Dorsolateral prefrontal cortex (tissue), 120 donors: ENCODE measurements at regions of chr7 and their contacts with region 1.

Region 1: GRCh38 chr7:158695726-158696452 is 8.7 kb downstream of the NCAPG2 start:
- DNase-seq: peak in 6 of 10 donors; percentile 32 to 68 (median 54)
- H3K4me3 ChIP-seq: peak overlapping the region in 8 of 59 donors; percentile 1 to 34 (median 22)
- H3K27ac ChIP-seq: peak overlapping the region in 33 of 59 donors; percentile 0 to 67 (median 38)
- H3K27me3 ChIP-seq: no peaks in the 10 kb centered on the region
- CTCF ChIP-seq: peak in 55 of 56 donors; percentile 31 to 80 (median 61)

Region 2: DNA sequence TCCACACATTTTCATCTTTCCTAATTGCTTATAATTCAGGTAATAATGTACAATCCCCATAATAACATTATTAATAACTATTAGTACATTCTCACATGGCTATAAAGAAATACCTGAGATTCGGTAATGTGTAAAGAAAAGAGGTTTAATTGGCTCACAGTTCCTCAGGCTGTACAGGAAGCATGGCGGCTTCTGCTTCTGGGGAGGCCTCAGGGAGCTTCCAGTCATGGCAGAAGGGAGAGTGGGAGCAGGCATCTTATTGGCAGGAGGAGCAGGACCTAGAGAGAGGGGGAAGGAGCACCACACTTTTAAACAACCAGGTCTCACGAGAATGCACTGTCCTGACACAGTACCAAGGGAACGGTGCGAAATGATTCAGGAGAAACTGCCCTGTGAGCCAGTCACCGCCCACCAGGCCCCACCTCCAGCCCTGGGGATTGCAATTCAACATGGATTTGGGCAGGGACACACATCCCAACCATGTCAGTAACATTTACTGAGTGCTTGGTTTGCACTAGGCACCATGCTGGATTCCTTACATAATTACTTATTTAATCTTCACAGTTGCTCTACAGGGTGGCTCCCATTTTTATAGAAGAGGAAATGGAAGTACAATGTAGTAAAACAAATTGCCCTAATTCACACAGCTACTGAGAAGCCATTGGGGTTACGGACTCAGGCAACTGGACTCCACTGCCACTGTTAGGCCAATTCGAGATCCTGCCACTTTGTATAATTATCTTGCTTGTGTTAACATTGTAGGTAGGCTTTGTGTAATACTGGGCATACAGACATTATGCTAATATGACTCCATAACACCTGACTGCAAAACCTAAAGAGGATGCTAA is 142.1 kb after region 1 on chr7:
- intact Hi-C with region 1: no loop called
- DNase-seq: no peak
- H3K4me3 ChIP-seq: no peak overlapping the region
- H3K27ac ChIP-seq: no peak overlapping the region
- H3K27me3 ChIP-seq: no peaks in the 10 kb centered on the region
- CTCF ChIP-seq: no peak

Region 3: DNA sequence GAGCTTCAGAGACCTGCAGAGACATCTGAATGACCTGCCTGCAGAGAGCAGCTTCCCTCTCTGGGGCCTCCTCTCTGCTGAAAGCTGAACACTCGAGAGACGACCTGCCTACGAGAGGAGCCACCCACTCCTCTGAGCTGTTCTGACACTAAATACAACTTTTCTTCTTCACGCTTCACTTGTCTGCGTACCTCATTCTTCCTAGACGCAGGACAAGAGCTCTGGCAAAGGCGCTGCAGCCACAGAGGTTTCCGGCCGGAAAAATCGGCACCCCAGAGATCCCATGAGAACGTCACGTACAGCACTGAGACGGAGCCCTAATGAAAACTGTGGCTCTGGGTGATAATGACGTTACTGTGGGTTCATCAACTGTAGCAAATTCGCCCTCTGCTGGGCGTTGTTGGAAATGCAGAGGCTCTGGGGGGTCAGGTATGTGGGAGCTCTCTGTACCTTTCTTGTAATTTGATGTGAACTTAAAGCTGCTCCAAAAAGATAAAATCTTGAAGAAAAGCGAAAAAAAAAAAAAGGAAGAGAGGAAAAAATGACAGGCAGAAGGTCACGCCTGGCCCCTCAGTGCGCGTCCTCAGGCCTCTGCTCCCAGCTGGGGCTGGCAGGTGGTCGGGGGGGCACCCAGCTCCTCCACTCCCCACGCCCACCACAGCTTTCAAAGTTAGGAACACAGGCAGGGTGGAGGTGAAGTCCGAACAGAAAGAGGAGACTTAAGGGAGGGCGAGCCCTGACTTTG is 281.1 kb after region 1 on chr7:
- intact Hi-C with region 1: loop called in 1 of 2 experiments (anchors 2 kb)
- DNase-seq: peak; percentile 17 to 87 (median 78)
- H3K4me3 ChIP-seq: peak overlapping the region in 46 of 59 donors; percentile 9 to 60 (median 38)
- H3K27ac ChIP-seq: peak overlapping the region in 20 of 59 donors; percentile 7 to 73 (median 42)
- H3K27me3 ChIP-seq: no peaks in the 10 kb centered on the region
- CTCF ChIP-seq: peak; percentile 61 to 95 (median 84)